ENCODE measurements at regions of chr6 and their contacts with region 1.

Region 1: DNA sequence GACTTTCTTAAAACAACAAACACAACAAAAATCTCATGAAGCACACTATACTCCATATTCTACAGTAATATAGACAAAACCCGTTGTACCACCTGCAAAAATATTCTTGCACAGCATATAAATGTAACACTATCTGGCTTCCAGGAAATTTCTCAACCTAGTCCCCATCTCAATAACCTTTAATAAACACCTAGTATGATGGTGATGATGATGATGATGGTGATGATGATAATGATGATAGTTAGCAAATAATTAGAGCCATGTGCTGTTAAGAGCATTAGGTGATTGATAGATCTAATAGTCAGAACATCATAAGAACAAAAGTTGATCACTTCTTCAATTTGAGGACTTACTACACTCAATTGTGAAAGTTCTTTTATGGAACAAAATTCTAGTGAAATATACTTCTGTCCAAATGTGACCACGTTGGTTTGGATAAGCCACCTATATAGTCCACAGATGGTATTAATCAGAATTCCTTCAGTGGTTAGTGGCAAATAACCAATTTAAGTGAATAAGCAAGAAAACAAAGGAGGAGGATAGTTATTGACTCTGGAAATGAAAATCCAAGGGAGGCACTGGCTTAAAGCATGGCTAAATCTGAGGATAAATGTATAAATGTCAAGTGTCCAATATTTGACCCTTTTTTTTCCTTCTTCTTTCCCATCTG is 268.6 kb upstream of the MARCKS start:
- DNase-seq: no peak
- ATAC-seq: no peak
- H3K4me3 ChIP-seq: no peak overlapping the region
- H3K4me3 Mint-ChIP-seq: no peak overlapping the region
- H3K27ac ChIP-seq: no peak overlapping the region
- H3K27ac Mint-ChIP-seq: no peak overlapping the region
- H3K4me1 ChIP-seq: no peaks in the 10 kb centered on the region
- H3K4me1 Mint-ChIP-seq: no peaks in the 10 kb centered on the region
- H3K27me3 ChIP-seq: no peaks in the 10 kb centered on the region
- H3K27me3 Mint-ChIP-seq: peaks cover 0 to 6% of the 10 kb centered on the region in 2 donors

Region 2: GRCh38 chr6:113719056-113719455 is 130.5 kb after region 1 on chr6:
- CTCF ChIA-PET with region 1: no interaction called
- POLR2A ChIA-PET with region 1: interaction called in 1 of 2 experiments, 14 read pairs
- DNase-seq: no peak
- ATAC-seq: no peak
- H3K4me3 ChIP-seq: no peak overlapping the region
- H3K4me3 Mint-ChIP-seq: no peak overlapping the region
- H3K27ac ChIP-seq: no peak overlapping the region
- H3K27ac Mint-ChIP-seq: no peak overlapping the region
- H3K4me1 ChIP-seq: no peaks in the 10 kb centered on the region
- H3K4me1 Mint-ChIP-seq: no peaks in the 10 kb centered on the region
- H3K27me3 ChIP-seq: peaks cover 0 to 6% of the 10 kb centered on the region in 2 experiments
- H3K27me3 Mint-ChIP-seq: peaks cover 8 to 18% of the 10 kb centered on the region in 2 donors

Measured in T-cell (primary cell).